ENCODE measurements at regions of chr10 and their contacts with region 1.

Region 1: DNA sequence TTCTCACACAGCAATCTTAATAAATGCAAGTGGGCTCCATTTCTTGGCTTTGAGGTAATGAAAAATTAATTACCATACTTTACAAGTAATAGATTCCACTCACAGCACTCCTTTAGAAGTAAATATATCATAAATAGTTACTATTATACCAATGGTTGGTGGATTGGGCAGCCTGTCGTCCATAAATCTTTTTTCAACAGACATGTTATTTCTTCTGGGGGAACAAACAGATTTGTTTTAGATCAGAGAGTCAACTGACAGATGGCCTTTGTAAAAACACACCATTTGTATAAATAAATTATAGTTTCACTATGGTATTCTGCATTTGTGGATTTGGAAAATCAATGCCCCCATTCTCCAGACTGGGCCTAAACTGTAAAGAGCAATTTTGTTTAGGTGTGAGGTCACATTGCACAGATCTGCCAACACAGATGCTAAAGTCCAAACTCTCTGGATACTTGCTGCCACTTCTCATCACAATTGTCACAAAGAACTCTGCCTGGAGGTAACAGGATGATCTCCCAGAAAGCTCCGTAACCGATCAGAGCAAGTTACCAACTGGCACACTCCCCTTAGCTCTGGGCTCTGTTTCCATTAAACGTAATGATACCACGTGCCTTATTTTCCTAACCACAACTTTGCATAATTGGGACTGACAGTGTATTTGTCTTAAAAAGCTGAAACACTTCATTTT is 4.5 kb upstream of the MACROH2A2 start:
- DNase-seq: no peak
- H3K4me3 ChIP-seq: no peak overlapping the region
- H3K27ac ChIP-seq: peak overlapping the region in 13 of 59 donors; percentile 1 to 70 (median 36)
- H3K27me3 ChIP-seq: peaks cover 0 to 4% (median 0%) of the 10 kb centered on the region in 45 donors
- CTCF ChIP-seq: no peak

Region 2: GRCh38 chr10:69757553-69758309 is 290.4 kb before region 1 on chr10:
- intact Hi-C with region 1: no loop called
- DNase-seq: peak in 4 of 10 donors; percentile 32 to 48 (median 38)
- H3K4me3 ChIP-seq: no peak overlapping the region
- H3K27ac ChIP-seq: peak overlapping the region in 8 of 59 donors; percentile 11 to 33 (median 21)
- H3K27me3 ChIP-seq: peaks cover 0 to 5% (median 0%) of the 10 kb centered on the region in 45 donors
- CTCF ChIP-seq: no peak

Region 3: GRCh38 chr10:69831231-69831855 is 216.8 kb before region 1 on chr10:
- intact Hi-C with region 1: no loop called
- DNase-seq: no peak
- H3K4me3 ChIP-seq: no peak overlapping the region
- H3K27ac ChIP-seq: no peak overlapping the region
- H3K27me3 ChIP-seq: peaks cover 0 to 18% (median 0%) of the 10 kb centered on the region in 45 donors
- CTCF ChIP-seq: no peak

Region 4: GRCh38 chr10:69960988-69961880 is 86.9 kb before region 1 on chr10:
- intact Hi-C with region 1: loop called in 1 of 2 experiments (anchors 10 kb)
- DNase-seq: no peak
- H3K4me3 ChIP-seq: no peak overlapping the region
- H3K27ac ChIP-seq: peak overlapping the region in 2 of 59 donors; percentile 4 to 10
- H3K27me3 ChIP-seq: no peaks in the 10 kb centered on the region
- CTCF ChIP-seq: peak in 22 of 56 donors; percentile 10 to 46 (median 21)